Dendritic cell treated with granulocyte-macrophage colony-stimulating factor and Interleukin-4, amounts not matched to agents 40 ng/mL and 50 ng/mL, for 4 days (primary cell): ENCODE measurements at regions of chr18 and their contacts with region 1.

Region 1: GRCh38 chr18:13585379-13586153 is 140.8 kb downstream of the FAM210A start:
- H3K4me3 Mint-ChIP-seq: peak overlapping the region; percentile 20
- H3K27ac Mint-ChIP-seq: peak overlapping the region; percentile 73
- H3K4me1 Mint-ChIP-seq: peaks cover 84% of the 10 kb centered on the region
- H3K27me3 Mint-ChIP-seq: peaks cover 2% of the 10 kb centered on the region

Region 2: GRCh38 chr18:13619505-13620202 is 34.1 kb after region 1 on chr18:
- intact Hi-C with region 1: loop called (anchors 5 kb)
- H3K4me3 Mint-ChIP-seq: no peak overlapping the region
- H3K27ac Mint-ChIP-seq: peak overlapping the region; percentile 69
- H3K4me1 Mint-ChIP-seq: peaks cover 80% of the 10 kb centered on the region
- H3K27me3 Mint-ChIP-seq: no peaks in the 10 kb centered on the region